Activated CD4-positive, alpha-beta T cell treated with anti-CD3 and anti-CD28 coated beads, Interleukin-2, amount 10 ng/mL, durations not matched to agents 24 days and 14 days (primary cell): ENCODE measurements at regions of chr13 and their contacts with region 1.

Region 1: GRCh38 chr13:32581177-32581786 is 5.0 kb upstream of the PDS5B start:
- DNase-seq: no peak
- H3K4me3 Mint-ChIP-seq: no peak overlapping the region
- H3K27ac Mint-ChIP-seq: no peak overlapping the region
- H3K4me1 Mint-ChIP-seq: peaks cover 7% of the 10 kb centered on the region
- H3K27me3 Mint-ChIP-seq: peaks cover 9% of the 10 kb centered on the region

Region 2: GRCh38 chr13:31909864-31910551 is 671.3 kb before region 1 on chr13:
- intact Hi-C with region 1: loop called (anchors 5 kb)
- DNase-seq: peak; percentile 86
- H3K4me3 Mint-ChIP-seq: no peak overlapping the region
- H3K27ac Mint-ChIP-seq: no peak overlapping the region
- H3K4me1 Mint-ChIP-seq: peaks cover 14% of the 10 kb centered on the region
- H3K27me3 Mint-ChIP-seq: peaks cover 31% of the 10 kb centered on the region

Region 3: GRCh38 chr13:32381539-32381938 is 199.7 kb before region 1 on chr13:
- intact Hi-C with region 1: loop called (anchors 2 kb)
- DNase-seq: peak; percentile 79
- H3K4me3 Mint-ChIP-seq: no peak overlapping the region
- H3K27ac Mint-ChIP-seq: no peak overlapping the region
- H3K4me1 Mint-ChIP-seq: peaks cover 1% of the 10 kb centered on the region
- H3K27me3 Mint-ChIP-seq: no peaks in the 10 kb centered on the region

Region 4: GRCh38 chr13:32472194-32472621 is 109.1 kb before region 1 on chr13:
- intact Hi-C with region 1: loop called (anchors 1 kb)
- DNase-seq: no peak
- H3K4me3 Mint-ChIP-seq: no peak overlapping the region
- H3K27ac Mint-ChIP-seq: peak overlapping the region; percentile 54
- H3K4me1 Mint-ChIP-seq: peaks cover 15% of the 10 kb centered on the region
- H3K27me3 Mint-ChIP-seq: no peaks in the 10 kb centered on the region